HEK293T (cell line): ENCODE measurements at regions of chr9 and their contacts with region 1.

Region 1: GRCh38 chr9:136118320-136119060 is at the start of gene TMEM250:
- DNase-seq: peak; percentile 97

Region 2: DNA sequence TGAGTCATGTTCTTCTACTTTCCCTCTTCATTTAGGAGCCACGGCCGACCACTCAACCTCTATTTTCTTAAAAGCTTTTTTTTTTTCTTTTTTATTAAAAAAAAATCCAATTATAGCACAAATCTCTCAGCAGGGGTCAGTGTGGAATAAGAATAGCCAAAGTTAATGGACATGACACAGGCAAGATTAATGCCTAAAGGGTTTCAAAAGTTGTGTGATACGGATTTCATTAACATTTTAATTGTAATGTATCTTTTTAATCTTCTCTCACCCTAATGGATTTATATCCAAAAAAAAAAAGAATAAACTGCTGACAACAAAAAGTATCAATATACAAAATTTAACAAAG is 28.8 kb before region 1 on chr9:
- CTCF ChIA-PET with region 1: interaction called, 12 read pairs
- POLR2A ChIA-PET with region 1: interaction called, 3 read pairs
- DNase-seq: no peak

Region 3: DNA sequence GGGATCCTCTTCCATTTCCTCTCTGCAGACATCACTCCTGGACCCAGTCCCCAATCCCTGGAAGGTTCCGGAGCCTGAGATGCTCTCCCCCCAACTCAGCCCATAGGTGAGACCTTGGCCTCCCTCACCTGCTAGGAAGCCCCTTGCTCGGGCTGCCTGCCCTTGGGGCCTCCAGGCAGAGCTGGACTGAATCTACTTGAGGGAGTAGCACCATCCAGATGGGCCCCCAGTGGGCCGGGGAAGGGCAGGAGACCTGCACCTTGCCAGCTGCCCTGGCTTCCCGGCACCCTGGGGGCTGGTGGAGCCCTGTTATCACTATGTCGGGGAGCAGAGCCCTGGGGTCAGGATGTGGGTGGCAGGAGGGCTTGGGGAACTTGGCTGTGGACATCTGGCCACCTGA is 27.1 kb after region 1 on chr9:
- CTCF ChIA-PET with region 1: no interaction called
- POLR2A ChIA-PET with region 1: no interaction called
- DNase-seq: no peak